Heart right ventricle (tissue), 16 donors: ENCODE measurements at regions of chr14 and their contacts with region 1.

Region 1: DNA sequence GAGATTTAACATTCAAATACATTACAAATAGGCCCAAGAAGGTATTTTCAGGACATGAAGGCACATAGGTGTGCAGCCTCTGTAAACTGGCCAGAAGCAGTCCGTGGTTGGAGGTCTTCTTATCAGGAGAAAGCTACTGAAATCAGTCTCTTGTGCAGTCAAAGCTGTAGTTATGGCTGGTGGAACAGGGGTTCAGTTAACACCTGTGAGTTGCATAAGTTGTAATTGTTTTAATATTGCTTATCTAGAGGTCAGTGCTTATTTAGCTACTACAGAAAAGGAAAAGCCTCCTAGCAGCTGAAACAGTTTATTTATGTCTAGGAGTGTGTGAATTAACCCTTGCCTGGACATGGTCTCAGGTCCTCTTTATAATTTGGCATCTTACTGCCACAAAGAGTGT is 377.6 kb upstream of the MDGA2 start:
- DNase-seq: no peak
- ATAC-seq: no peak
- H3K4me3 ChIP-seq: no peak overlapping the region
- H3K27ac ChIP-seq: no peak overlapping the region
- H3K4me1 ChIP-seq: no peaks in the 10 kb centered on the region
- H3K27me3 ChIP-seq: no peaks in the 10 kb centered on the region
- CTCF ChIP-seq: no peak

Region 2: GRCh38 chr14:47988175-47988574 is 64.8 kb before region 1 on chr14:
- intact Hi-C with region 1: no loop called
- DNase-seq: no peak
- ATAC-seq: no peak
- H3K4me3 ChIP-seq: no peak overlapping the region
- H3K27ac ChIP-seq: no peak overlapping the region
- H3K4me1 ChIP-seq: no peaks in the 10 kb centered on the region
- H3K27me3 ChIP-seq: no peaks in the 10 kb centered on the region
- CTCF ChIP-seq: no peak

Region 3: DNA sequence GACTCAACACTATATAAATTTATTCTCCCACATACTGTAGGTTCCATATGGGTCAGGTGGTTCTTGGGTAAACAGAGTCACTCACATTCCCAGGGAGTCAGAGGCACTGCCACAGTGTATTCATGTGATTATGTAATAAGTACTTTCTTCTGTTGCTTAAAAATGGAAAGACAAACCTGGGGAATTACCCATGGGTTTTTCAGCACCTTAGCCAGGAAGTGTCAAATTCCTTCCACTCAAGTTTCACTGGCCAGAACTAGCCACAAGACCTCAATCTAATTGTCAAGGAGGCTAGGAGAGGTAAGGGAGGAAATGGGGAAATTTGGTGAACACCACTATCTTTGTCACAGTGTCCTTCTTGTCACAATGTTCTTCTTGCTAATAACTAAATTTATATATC is 44.3 kb before region 1 on chr14:
- intact Hi-C with region 1: no loop called
- DNase-seq: no peak
- ATAC-seq: no peak
- H3K4me3 ChIP-seq: no peak overlapping the region
- H3K27ac ChIP-seq: no peak overlapping the region
- H3K4me1 ChIP-seq: no peaks in the 10 kb centered on the region
- H3K27me3 ChIP-seq: no peaks in the 10 kb centered on the region
- CTCF ChIP-seq: no peak

Region 4: DNA sequence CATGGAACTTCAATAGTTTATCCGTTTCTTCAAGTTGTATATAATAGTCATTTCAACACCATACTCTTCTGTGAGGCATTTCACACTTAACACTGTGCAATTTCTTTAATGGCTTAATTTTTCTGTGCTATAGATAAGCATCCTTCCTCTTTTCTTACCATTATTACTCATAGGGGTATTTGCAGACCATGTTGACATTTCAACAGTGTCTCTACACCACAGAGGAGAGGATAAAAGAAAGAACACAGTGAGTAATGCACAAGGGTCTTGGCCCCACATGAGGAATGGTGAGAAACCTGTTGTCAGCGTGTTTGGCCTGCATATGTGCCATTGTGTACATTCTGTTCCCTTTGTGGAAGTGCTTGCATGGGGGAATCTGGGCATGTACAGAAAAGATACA is 43.9 kb after region 1 on chr14:
- intact Hi-C with region 1: loop called in 1 of 10 experiments (anchors 5 kb)
- DNase-seq: no peak
- ATAC-seq: no peak
- H3K4me3 ChIP-seq: no peak overlapping the region
- H3K27ac ChIP-seq: no peak overlapping the region
- H3K4me1 ChIP-seq: no peaks in the 10 kb centered on the region
- H3K27me3 ChIP-seq: no peaks in the 10 kb centered on the region
- CTCF ChIP-seq: no peak